MCF 10A (cell line): ENCODE measurements at regions of chr10 and their contacts with region 1.

Region 1: DNA sequence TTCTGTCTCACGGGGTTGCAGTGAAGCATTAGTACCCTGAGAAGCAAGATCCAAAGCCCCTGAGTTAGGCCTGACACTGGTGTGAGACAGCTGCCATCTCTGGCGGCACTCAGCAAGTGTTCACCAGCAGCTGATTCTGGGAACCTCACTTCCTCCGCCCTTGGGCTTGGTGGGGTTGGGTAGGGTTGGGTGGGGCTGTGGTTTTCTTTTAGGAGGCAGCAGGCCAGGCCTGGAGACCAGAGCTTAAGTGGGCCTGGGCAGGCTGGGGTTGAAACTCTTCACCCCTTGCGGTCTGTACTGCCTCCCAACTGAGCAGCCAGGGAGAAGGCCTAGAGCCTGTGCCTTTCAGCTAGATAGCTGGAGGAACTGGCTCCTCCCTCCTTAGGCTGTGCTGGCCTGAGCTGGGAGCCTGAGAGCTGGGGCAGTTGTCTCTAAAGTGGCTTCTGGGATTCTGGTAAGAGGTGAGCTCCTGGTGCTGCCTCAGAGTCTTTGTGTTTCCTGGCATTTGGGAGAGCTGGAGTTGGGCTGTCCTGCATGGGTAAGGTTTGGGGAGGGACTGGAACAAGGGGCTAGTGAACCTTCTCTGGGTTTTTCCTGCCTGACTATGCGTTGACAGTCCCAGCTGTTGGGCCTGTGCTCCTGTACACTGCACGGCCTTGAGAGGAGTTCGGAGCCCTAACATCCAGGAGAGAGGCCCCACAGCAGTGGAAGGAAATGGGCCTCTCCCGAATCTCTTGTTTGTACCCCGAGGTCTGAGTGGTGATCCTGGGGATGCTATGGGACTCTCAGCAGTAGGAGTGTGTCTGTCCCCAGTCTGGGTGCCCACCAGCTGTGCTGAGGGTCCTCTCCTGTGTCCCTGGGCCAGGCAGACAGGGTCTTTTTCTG is 5.2 kb downstream of the TSPAN14 start:
- DNase-seq: peak; percentile 88
- H3K4me3 Mint-ChIP-seq: peak overlapping the region; percentile 58
- H3K27ac Mint-ChIP-seq: peak overlapping the region; percentile 89
- H3K4me1 Mint-ChIP-seq: peaks cover 65% of the 10 kb centered on the region
- H3K27me3 Mint-ChIP-seq: no peaks in the 10 kb centered on the region
- CTCF ChIP-seq: no peak

Region 2: DNA sequence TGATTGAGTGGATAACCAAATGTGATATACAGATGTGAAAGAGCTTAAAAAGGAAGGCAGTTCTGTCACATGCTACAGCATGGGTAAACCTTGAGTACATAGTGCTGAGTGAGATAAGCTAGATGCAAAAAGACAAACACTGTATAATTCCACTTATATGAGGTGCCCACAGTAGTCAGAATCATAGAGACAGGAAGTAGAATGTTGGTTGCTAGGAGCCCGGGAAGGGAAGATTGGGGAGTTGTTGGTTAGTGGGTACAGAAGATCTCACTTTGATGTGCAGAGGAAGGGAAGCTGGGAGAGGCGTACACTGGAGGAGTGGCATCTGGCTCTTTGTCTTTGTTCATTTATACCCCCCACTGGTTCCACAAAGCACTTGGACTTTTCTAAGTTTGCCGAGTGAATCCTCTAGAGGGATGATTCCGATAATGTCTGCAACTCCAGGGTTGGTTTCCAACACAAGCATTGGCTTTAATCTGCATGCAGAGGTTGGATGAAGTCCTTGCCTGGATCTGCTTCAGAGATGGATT is 34.3 kb after region 1 on chr10:
- CTCF ChIA-PET with region 1: interaction called, 923 read pairs
- POLR2A ChIA-PET with region 1: interaction called, 225 read pairs
- intact Hi-C with region 1: no loop called
- DNase-seq: no peak
- H3K4me3 Mint-ChIP-seq: no peak overlapping the region
- H3K27ac Mint-ChIP-seq: peak overlapping the region; percentile 1
- H3K4me1 Mint-ChIP-seq: peaks cover 69% of the 10 kb centered on the region
- H3K27me3 Mint-ChIP-seq: no peaks in the 10 kb centered on the region
- CTCF ChIP-seq: no peak